Colonic mucosa (tissue), 4 donors: ENCODE measurements at regions of chr6 and their contacts with region 1.

Region 1: GRCh38 chr6:128519132-128519930 is 1.1 kb downstream of the PTPRK start:
- DNase-seq: peak; percentile 66
- H3K4me3 ChIP-seq: peak overlapping the region; percentile 76
- H3K27ac ChIP-seq: peak overlapping the region; percentile 94
- H3K4me1 ChIP-seq: no peaks in the 10 kb centered on the region
- H3K27me3 ChIP-seq: no peaks in the 10 kb centered on the region
- CTCF ChIP-seq: no peak

Region 2: DNA sequence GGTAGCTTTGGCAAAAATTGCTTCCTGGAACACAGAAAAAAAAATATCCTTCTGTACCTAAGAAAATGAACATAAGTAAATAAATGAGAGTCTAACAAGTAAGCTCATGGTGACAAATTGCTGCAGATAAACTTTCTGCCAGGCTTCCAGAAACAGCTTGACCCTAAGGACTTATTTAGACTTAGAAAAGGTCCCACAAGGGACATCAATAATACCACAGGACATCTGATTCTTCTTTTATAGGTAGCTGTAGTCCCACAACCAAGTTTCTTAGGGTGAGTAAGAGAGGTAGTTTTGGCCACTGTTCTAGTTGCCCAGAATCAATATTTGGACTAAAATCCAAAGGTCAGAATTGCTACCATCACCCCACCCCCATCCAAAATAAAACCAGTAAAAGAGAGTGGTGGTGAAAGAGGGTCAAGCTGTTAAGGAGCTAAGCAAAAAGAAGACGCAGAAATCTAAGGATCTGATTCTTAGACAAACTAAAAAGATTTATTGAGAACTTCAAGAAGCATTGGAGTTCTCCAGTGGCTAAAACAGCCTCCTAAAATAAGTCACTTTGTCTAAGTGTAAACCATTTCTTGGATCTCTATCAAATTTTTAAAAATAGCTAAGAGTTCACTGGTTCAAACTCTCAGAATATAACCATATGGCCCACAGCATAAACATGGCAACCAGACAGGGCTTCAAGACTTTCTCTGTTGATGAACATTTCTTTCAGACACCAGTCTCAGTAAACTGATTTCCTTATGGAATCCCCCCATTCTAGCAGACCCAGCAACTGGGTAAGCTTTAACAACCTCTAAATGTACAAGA is 179.5 kb before region 1 on chr6:
- intact Hi-C with region 1: loop called (anchors 10 kb)
- DNase-seq: no peak
- H3K4me3 ChIP-seq: no peak overlapping the region
- H3K27ac ChIP-seq: no peak overlapping the region
- H3K4me1 ChIP-seq: no peaks in the 10 kb centered on the region
- H3K27me3 ChIP-seq: no peaks in the 10 kb centered on the region
- CTCF ChIP-seq: no peak

Region 3: GRCh38 chr6:128667339-128667858 is 148.1 kb after region 1 on chr6:
- intact Hi-C with region 1: no loop called
- DNase-seq: no peak
- H3K4me3 ChIP-seq: no peak overlapping the region
- H3K27ac ChIP-seq: no peak overlapping the region
- H3K4me1 ChIP-seq: no peaks in the 10 kb centered on the region
- H3K27me3 ChIP-seq: no peaks in the 10 kb centered on the region
- CTCF ChIP-seq: no peak